ENCODE measurements at regions of chr2 and their contacts with region 1.

Region 1: GRCh38 chr2:176187899-176188773 is at the start of gene HOXD1:
- DNase-seq: no peak
- ATAC-seq: no peak
- H3K4me3 ChIP-seq: peak within 1 kb of the TSS; percentile 65
- H3K4me3 Mint-ChIP-seq: peak within 1 kb of the TSS; percentile 82 to 95 (median 91)
- H3K27ac ChIP-seq: no peak within 1 kb of the TSS
- H3K27ac Mint-ChIP-seq: peak within 1 kb of the TSS in 3 of 9 donors; percentile 9 to 59 (median 25)
- H3K4me1 ChIP-seq: peaks cover 3 to 9% of the 10 kb centered on the region in 2 donors
- H3K4me1 Mint-ChIP-seq: peaks cover 11 to 24% (median 21%) of the 10 kb centered on the region in 7 donors
- H3K27me3 ChIP-seq: peaks cover 4 to 24% of the 10 kb centered on the region in 2 donors
- H3K27me3 Mint-ChIP-seq: peaks cover 76 to 85% (median 83%) of the 10 kb centered on the region in 5 donors
- total RNA-seq, gene HOXD1: not detected

Region 2: DNA sequence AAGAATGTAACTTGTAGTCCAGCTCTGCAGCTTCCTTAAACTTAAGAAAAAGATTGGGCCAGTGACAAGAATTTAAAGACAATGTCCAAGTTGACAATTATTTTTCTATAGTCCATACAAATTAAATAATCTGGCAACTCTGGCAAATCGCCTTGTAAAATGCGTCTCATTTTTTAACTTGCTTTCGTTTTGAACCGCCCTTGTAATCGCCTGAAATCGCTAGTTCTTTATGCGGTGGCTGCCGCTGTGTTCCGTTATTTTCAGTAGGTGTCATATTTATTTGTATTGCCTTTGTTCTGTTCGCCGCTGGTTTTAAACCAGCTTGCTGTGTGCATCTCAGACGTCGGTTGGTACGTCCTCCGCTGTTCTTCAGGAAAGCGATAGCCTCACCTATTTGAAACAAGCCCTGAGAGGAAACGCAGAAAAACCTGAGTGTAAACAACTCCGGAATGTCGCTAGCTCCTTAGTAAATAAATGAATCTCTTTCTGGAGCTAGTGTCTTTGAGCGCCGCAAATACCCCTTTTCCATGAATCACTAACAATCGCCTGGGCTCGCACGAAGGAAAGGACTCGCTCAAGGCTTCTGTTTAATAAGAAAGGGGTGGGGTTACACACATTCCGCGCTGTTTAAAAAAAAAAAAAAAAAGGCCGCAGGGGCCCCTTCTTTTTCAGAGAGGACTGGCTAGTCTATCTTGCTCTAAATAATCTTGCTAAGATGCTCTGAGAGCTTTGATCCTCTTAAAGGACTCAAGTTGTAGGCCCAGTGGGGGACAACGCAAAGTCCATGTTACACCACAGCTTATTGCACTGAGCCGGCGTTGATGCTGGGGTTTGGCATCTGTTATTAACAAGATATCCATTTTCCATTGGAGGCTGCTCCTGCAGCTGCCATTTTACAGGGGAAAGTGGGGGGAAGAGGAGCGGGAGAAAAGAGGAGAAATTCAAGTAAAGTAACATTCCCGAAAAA is 55.6 kb before region 1 on chr2:
- CTCF ChIA-PET with region 1: no interaction called
- POLR2A ChIA-PET with region 1: no interaction called
- intact Hi-C with region 1: loop called in 1 of 2 experiments (anchors 2 kb)
- DNase-seq: no peak
- ATAC-seq: no peak
- H3K4me3 ChIP-seq: peak overlapping the region; percentile 38
- H3K4me3 Mint-ChIP-seq: peak overlapping the region; percentile 65 to 92 (median 75)
- H3K27ac ChIP-seq: no peak overlapping the region
- H3K27ac Mint-ChIP-seq: peak overlapping the region in 4 of 9 donors; percentile 6 to 57 (median 28)
- H3K4me1 ChIP-seq: peaks cover 3 to 16% of the 10 kb centered on the region in 2 donors
- H3K4me1 Mint-ChIP-seq: peaks cover 17 to 53% (median 49%) of the 10 kb centered on the region in 7 donors
- H3K27me3 ChIP-seq: peaks cover 42 to 71% of the 10 kb centered on the region in 2 donors
- H3K27me3 Mint-ChIP-seq: peaks cover 78 to 85% (median 83%) of the 10 kb centered on the region in 5 donors

Region 3: DNA sequence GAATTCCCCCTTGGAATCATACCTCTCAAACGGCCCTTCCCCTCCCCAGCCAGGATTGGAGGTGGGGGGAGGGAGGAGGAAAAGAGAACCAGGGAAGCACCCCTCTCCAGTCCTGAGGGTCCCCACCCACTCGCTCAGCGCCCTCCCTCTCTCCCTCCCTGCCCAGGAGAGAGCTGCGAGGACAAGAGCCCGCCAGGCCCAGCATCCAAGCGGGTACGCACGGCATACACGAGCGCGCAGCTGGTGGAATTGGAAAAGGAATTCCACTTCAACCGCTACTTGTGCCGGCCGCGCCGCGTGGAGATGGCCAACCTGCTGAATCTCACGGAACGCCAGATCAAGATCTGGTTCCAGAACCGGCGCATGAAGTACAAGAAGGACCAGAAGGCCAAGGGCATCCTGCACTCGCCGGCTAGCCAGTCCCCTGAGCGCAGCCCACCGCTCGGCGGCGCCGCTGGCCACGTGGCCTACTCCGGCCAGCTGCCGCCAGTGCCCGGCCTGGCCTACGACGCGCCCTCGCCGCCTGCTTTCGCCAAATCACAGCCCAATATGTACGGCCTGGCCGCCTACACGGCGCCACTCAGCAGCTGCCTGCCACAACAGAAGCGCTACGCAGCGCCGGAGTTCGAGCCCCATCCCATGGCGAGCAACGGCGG is 16.7 kb before region 1 on chr2:
- CTCF ChIA-PET with region 1: no interaction called
- POLR2A ChIA-PET with region 1: no interaction called
- intact Hi-C with region 1: loop called in 1 of 2 experiments (anchors 2 kb)
- DNase-seq: no peak
- ATAC-seq: no peak
- H3K4me3 ChIP-seq: no peak overlapping the region
- H3K4me3 Mint-ChIP-seq: peak overlapping the region in 1 of 10 donors; percentile 41
- H3K27ac ChIP-seq: no peak overlapping the region
- H3K27ac Mint-ChIP-seq: no peak overlapping the region
- H3K4me1 ChIP-seq: no peaks in the 10 kb centered on the region
- H3K4me1 Mint-ChIP-seq: peaks cover 0 to 32% (median 15%) of the 10 kb centered on the region in 7 donors
- H3K27me3 ChIP-seq: peaks cover 17 to 53% of the 10 kb centered on the region in 2 donors
- H3K27me3 Mint-ChIP-seq: peaks cover 82 to 97% (median 87%) of the 10 kb centered on the region in 5 donors